Sigmoid colon (tissue), 7 donors: ENCODE measurements at regions of chrX and their contacts with region 1.

Region 1: GRCh38 chrX:43836435-43837184 is 45.6 kb downstream of the MAOB start:
- DNase-seq: no peak
- H3K4me3 ChIP-seq: no peak overlapping the region
- H3K27ac ChIP-seq: no peak overlapping the region
- H3K4me1 ChIP-seq: no peaks in the 10 kb centered on the region
- H3K27me3 ChIP-seq: no peaks in the 10 kb centered on the region
- CTCF ChIP-seq: peak; percentile 7 to 53 (median 40)
- EP300 ChIP-seq: no peak
- POLR2A ChIP-seq: no peak

Region 2: DNA sequence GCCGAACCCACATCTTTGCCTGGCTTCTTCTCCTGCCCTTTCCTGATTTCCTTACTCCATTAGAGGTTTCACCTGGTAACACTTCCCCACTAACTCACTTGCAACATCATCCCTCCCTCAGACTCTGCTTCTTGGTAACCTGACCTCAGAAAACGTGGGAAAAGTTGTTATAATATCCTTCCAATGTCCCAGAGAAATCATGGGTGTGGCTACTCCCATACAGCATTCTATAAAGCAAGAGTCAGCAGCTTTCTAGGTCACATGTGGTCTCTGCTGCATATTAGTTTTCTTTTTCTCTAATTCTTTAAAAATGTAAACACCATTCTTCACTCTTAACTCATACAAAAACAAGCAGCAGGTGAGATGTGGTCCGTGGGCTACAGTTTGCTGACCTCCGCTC is 463.6 kb before region 1 on chrX:
- intact Hi-C with region 1: no loop called
- DNase-seq: no peak
- H3K4me3 ChIP-seq: no peak overlapping the region
- H3K27ac ChIP-seq: no peak overlapping the region
- H3K4me1 ChIP-seq: no peaks in the 10 kb centered on the region
- H3K27me3 ChIP-seq: no peaks in the 10 kb centered on the region
- CTCF ChIP-seq: no peak
- EP300 ChIP-seq: no peak
- POLR2A ChIP-seq: no peak

Region 3: DNA sequence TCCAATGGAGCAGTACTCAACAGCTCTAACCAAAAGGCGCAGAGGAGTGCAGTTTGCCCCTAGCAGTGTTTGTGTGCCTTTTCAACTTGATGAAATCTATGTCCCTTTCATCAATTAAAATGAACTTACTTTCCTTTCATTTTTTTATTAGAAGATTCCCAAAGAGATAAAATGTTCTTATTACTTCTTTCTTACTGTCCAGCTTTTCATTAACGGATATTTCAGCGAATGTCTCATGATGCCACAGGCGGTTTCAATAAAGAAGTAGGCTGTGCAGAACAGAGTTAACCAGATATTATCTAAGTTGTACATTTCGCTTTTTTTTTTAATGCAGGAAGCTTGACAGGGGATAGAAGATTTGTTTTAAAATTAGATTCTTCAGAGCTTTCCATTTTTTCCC is 49.0 kb after region 1 on chrX:
- intact Hi-C with region 1: loop called (anchors 5 kb)
- DNase-seq: no peak
- H3K4me3 ChIP-seq: no peak overlapping the region
- H3K27ac ChIP-seq: no peak overlapping the region
- H3K4me1 ChIP-seq: peaks cover 0 to 5% (median 0%) of the 10 kb centered on the region in 4 donors
- H3K27me3 ChIP-seq: peaks cover 0 to 3% (median 0%) of the 10 kb centered on the region in 3 donors
- CTCF ChIP-seq: no peak
- EP300 ChIP-seq: no peak
- POLR2A ChIP-seq: no peak

Region 4: GRCh38 chrX:43939187-43939926 is 102.7 kb after region 1 on chrX:
- intact Hi-C with region 1: loop called (anchors 5 kb)
- DNase-seq: no peak
- H3K4me3 ChIP-seq: no peak overlapping the region
- H3K27ac ChIP-seq: no peak overlapping the region
- H3K4me1 ChIP-seq: peaks cover 0 to 3% (median 0%) of the 10 kb centered on the region in 4 donors
- H3K27me3 ChIP-seq: no peaks in the 10 kb centered on the region
- CTCF ChIP-seq: no peak
- EP300 ChIP-seq: no peak
- POLR2A ChIP-seq: no peak

Region 5: DNA sequence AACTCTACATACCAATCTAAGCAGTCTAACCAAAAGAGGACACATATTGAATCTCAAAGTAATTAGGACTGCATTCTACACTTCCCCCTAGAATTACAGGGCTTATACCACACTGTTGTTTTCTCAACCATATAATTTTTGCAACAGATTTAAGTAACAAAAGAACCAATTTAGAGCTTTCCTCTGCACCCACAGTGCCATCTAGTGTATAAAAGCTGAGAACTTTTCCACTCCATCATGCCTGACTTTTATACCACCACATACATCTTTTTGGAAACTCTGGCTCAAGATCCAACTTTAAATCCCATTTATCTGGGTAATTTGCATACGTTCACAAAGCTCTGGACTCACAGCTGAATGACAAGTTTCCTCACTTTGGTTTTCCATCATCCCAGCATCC is 407.4 kb after region 1 on chrX:
- intact Hi-C with region 1: loop called (anchors 10 kb)
- DNase-seq: no peak
- H3K4me3 ChIP-seq: no peak overlapping the region
- H3K27ac ChIP-seq: no peak overlapping the region
- H3K4me1 ChIP-seq: no peaks in the 10 kb centered on the region
- H3K27me3 ChIP-seq: no peaks in the 10 kb centered on the region
- CTCF ChIP-seq: peak in 2 of 4 experiments; percentile 38 to 39
- EP300 ChIP-seq: no peak
- POLR2A ChIP-seq: no peak